Sigmoid colon (tissue), 7 donors: ENCODE measurements at regions of chr14 and their contacts with region 1.

Region 1: DNA sequence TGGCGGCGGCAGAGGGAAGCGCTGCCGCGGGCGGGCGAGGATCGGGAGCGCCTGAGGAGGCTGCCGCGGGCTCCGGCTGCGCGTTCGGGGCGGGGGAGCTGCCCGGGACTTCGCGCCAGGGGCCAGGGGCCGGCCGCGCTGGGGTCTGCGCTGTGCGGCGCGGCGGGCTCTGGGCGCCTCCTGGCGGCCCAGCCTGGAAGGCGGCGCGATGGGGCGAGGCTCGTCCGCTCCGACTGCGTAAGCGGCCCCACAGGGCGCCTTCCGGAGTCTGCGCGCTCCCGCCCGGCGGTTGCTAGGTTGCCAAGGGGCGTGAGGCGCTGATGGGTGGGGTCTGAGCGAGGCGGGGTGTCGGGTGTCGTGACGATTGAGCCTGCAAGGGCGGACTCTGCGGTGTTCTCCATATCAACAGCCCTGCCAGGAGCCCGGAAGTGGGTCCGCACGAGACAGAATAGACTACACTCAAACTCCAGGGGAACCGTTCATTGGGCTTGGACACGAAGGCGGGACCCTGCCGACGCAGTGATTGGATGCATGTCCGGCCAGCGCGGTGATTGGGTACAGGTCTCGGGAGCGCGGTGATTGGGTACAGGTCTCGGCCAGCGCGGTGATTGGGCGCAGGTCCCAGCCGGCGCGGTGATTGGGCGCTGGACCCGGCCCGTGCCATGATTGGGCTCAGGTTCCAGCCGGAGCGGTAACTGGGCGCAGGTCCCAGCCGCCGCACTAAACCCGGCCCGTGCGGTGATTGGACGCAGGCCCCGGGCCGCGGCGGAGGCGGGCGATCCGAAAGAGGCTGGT is at the start of gene TEDC1:
- DNase-seq: peak; percentile 100
- H3K4me3 ChIP-seq: peak within 1 kb of the TSS; percentile 37 to 85 (median 73)
- H3K27ac ChIP-seq: peak within 1 kb of the TSS; percentile 91 to 99 (median 95)
- H3K4me1 ChIP-seq: peaks cover 0 to 52% (median 49%) of the 10 kb centered on the region in 4 donors
- H3K27me3 ChIP-seq: peaks cover 3 to 27% (median 24%) of the 10 kb centered on the region in 3 donors
- CTCF ChIP-seq: peak; percentile 11 to 79 (median 24)
- EP300 ChIP-seq: peak in 1 of 4 donors; percentile 3
- POLR2A ChIP-seq: no peak
- total RNA-seq, gene TEDC1: 0.16 to 5.2 (median 1.0) TPM

Region 2: DNA sequence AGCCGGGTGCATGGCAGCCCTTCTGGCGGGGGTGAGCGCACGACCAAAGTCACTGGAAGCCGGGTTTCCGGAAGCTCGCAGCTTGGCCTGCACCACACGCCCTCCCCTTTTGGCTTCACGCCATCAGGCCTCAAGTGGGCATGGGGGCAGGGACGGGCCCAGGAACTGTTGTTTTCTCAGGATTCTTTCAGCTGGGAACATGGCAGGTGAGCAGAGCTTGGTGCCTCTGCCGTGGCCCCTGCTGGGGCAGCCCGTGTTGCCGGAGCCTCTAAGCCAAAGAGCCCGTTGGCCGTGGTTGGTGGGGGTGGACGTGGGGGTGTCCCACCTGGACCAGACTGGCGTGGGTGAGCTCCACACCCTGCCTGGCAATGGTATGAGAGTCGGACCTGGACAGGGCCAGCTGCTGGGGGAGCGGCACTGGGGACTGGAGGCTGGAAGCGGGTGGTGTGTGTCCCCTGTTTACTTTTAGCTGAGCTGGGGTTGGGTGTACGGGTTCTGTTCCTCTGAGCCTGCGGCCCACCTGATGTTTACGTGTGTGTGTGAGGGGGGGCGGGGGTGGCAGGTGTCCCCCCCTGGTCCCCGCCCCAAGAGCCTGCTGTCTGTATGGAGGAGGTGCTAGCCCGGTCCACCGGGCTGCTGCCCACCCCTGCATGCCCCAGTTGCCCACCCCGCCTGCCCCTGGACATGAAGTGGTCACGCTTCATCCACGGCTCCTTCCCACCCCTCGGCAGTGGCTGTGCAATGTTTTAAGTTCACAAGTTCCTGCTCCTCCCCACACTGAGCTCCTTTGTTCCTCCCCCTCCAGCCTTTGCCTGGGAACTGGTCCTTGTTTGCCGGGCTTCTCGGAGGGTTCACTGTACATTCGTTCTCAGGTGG is 594.7 kb before region 1 on chr14:
- intact Hi-C with region 1: no loop called
- DNase-seq: peak; percentile 65
- H3K4me3 ChIP-seq: no peak overlapping the region
- H3K27ac ChIP-seq: peak overlapping the region in 1 of 4 donors; percentile 20
- H3K4me1 ChIP-seq: peaks cover 0 to 20% (median 18%) of the 10 kb centered on the region in 4 donors
- H3K27me3 ChIP-seq: no peaks in the 10 kb centered on the region
- CTCF ChIP-seq: no peak
- EP300 ChIP-seq: no peak
- POLR2A ChIP-seq: no peak

Region 3: GRCh38 chr14:105369653-105370040 is 121.1 kb before region 1 on chr14:
- intact Hi-C with region 1: loop called (anchors 2 kb)
- DNase-seq: no peak
- H3K4me3 ChIP-seq: no peak overlapping the region
- H3K27ac ChIP-seq: no peak overlapping the region
- H3K4me1 ChIP-seq: peaks cover 0 to 5% (median 2%) of the 10 kb centered on the region in 4 donors
- H3K27me3 ChIP-seq: no peaks in the 10 kb centered on the region
- CTCF ChIP-seq: no peak
- EP300 ChIP-seq: no peak
- POLR2A ChIP-seq: no peak

Region 4: GRCh38 chr14:105414456-105415371 is 76.1 kb before region 1 on chr14:
- intact Hi-C with region 1: loop called (anchors 2 kb)
- DNase-seq: peak; percentile 90
- H3K4me3 ChIP-seq: peak overlapping the region; percentile 20 to 59 (median 56)
- H3K27ac ChIP-seq: peak overlapping the region; percentile 77 to 82 (median 80)
- H3K4me1 ChIP-seq: peaks cover 0 to 47% (median 37%) of the 10 kb centered on the region in 4 donors
- H3K27me3 ChIP-seq: peaks cover 10 to 34% (median 24%) of the 10 kb centered on the region in 3 donors
- CTCF ChIP-seq: peak; percentile 11 to 86 (median 46)
- EP300 ChIP-seq: no peak
- POLR2A ChIP-seq: no peak

Region 5: DNA sequence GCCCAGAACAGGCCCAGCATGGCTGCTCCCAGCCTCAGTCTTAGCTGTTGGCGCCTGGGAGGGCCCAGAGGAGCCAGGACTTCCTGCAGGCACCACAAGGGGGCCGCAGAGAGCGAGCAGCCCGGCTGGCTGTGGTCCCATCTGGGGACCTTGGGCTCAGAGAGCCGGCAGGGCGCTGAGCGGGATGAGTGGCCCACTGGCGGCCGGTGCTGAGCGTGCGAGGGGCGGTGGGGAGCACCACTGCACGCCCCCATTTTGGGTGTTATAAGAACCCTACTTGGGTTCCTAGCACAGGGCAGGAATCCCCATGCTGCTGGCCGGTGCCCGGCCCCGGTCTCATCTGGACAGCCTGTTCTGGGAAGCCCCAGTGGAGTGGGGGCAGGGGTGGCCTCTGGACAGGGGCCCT is 42.1 kb before region 1 on chr14:
- intact Hi-C with region 1: loop called (anchors 1 kb)
- DNase-seq: peak; percentile 88
- H3K4me3 ChIP-seq: no peak overlapping the region
- H3K27ac ChIP-seq: peak overlapping the region in 1 of 4 donors; percentile 49
- H3K4me1 ChIP-seq: peaks cover 0 to 16% (median 12%) of the 10 kb centered on the region in 4 donors
- H3K27me3 ChIP-seq: no peaks in the 10 kb centered on the region
- CTCF ChIP-seq: peak; percentile 74 to 98 (median 82)
- EP300 ChIP-seq: no peak
- POLR2A ChIP-seq: no peak

Region 6: DNA sequence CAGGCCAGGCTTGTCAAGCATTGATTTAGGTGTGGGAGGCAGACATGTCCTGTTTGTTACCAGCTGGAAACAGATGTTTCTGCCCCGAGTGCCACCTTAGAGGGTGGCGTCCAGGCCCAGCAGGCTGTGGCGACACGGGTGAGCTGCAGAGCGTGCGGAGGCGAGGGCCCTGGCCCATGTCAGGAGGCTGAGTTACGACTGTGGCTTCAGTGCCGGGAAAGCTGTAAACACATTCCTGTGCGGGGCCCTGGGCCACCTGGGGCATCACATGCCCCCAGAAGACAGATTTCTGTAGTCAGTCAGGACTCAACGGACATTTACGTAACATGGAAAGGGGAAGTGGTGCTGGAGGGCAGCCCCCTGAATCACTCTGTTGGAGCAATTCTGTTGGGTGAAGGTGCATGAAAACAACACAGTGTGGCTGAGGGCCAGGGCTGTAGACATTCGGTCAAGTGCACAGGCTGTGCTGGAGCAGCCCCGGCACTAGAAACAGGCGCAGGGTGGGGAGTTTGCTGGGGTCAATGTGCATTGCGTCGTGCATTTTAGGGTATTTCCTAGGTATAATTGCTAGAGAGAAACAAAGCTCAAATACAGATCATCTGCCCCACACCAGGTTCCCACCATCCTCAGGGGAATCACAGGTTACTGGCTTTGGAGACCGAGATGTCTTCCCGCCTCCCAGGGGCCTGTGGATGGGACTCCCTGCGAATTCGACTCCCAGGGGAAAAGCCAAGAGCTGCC is 327.4 kb after region 1 on chr14:
- intact Hi-C with region 1: no loop called
- DNase-seq: no peak
- H3K4me3 ChIP-seq: no peak overlapping the region
- H3K27ac ChIP-seq: no peak overlapping the region
- H3K4me1 ChIP-seq: no peaks in the 10 kb centered on the region
- H3K27me3 ChIP-seq: no peaks in the 10 kb centered on the region
- CTCF ChIP-seq: no peak
- EP300 ChIP-seq: no peak
- POLR2A ChIP-seq: no peak